ENCODE measurements at regions of chr15 and their contacts with region 1.

Region 1: GRCh38 chr15:91311986-91312385 is 211.9 kb downstream of the SV2B start:
- DNase-seq: no peak
- ATAC-seq: no peak

Region 2: DNA sequence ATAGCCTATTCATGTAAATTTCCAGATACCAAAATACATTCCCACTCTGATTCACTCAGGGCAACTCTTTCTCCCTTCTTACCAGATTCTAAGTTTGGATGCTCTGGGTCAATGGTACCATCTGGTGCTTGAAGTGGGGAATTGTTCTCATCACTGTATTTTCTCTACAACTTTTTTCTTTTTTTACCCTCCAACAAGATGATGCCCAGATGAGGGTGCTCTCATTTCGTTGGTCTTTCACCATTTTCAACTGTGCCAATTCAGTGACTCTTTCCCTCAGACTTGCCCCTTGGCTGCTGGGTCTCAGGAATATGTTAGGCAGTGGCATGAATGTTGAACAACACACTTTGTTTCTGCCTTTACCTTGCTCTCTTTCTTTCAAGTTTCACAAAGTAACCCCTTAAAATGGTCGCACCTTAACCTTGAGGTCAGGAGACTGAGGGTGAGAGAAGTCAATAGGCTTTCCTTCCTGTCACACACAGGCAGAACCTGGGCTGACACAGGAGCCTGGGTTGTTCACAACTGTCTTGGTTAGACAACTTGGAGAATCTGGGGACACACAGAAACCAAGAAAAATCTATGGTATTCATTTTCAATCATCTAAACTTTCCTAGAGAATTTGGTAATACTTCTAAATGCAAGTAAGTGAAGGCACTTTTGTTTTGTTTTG is 210.8 kb after region 1 on chr15:
- intact Hi-C with region 1: loop called in 1 of 2 experiments (anchors 5 kb)
- DNase-seq: no peak
- ATAC-seq: peak; percentile 62 to 66